PC-3 (cell line): ENCODE measurements at regions of chr14 and their contacts with region 1.

Region 1: DNA sequence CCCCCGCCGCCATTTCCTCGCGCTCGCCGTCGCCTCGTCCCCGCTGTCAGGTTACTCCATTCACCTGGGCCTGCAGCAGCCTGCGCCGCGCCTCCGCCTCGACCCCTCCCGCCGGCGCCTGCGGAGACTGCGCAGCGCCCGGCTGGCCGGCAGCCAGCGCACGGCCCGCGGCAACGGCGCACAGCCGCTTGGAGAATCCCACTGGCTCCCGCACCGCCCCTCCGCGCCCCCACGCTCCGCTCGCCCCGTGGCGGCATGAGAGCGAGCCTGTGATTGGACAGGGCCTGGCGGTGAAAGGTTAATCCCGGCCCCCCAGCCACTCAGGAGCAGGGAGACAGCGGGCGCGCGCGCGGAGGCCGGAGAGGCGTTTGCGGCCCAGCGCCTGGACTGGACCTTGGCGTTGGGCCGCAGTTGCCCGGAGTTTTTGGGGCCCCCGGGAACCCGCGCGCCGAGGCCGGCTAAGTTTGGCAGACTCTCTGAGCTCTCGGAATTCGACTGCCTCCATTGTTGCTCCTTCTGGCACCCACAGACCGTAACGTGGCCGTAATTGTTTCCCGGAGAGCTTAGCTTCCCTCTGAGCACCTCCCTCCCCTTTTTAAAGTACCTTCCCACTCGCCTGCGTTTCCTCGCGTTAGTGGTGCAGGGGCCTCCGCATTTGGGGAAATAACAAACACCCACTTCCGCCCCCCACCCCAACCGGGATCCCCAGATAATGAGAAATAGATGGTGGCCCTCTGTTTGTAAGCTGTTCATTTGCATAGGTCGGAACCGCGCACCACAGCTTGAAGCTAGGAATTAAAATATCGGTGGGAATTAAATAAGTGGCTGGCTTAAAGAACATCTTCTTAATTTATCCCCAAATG is at the start of gene DICER1:
- DNase-seq: peak; percentile 96
- ATAC-seq: peak; percentile 77
- H3K4me3 ChIP-seq: peak within 1 kb of the TSS; percentile 88
- H3K27ac ChIP-seq: peak within 1 kb of the TSS; percentile 59
- H3K4me1 ChIP-seq: peaks cover 33% of the 10 kb centered on the region
- H3K27me3 ChIP-seq: no peaks in the 10 kb centered on the region
- CTCF ChIP-seq: no peak
- total RNA-seq, gene DICER1: 29.9 and 36.3 TPM in 2 replicates

Region 2: GRCh38 chr14:95117937-95118721 is 39.4 kb before region 1 on chr14:
- CTCF ChIA-PET with region 1: no interaction called
- POLR2A ChIA-PET with region 1: no interaction called
- intact Hi-C with region 1: loop called (anchors 2 kb)
- DNase-seq: no peak
- ATAC-seq: no peak
- H3K4me3 ChIP-seq: no peak overlapping the region
- H3K27ac ChIP-seq: no peak overlapping the region
- H3K4me1 ChIP-seq: peaks cover 6% of the 10 kb centered on the region; the same call in 1 of the 2 replicates
- H3K27me3 ChIP-seq: no peaks in the 10 kb centered on the region
- CTCF ChIP-seq: no peak

Region 3: DNA sequence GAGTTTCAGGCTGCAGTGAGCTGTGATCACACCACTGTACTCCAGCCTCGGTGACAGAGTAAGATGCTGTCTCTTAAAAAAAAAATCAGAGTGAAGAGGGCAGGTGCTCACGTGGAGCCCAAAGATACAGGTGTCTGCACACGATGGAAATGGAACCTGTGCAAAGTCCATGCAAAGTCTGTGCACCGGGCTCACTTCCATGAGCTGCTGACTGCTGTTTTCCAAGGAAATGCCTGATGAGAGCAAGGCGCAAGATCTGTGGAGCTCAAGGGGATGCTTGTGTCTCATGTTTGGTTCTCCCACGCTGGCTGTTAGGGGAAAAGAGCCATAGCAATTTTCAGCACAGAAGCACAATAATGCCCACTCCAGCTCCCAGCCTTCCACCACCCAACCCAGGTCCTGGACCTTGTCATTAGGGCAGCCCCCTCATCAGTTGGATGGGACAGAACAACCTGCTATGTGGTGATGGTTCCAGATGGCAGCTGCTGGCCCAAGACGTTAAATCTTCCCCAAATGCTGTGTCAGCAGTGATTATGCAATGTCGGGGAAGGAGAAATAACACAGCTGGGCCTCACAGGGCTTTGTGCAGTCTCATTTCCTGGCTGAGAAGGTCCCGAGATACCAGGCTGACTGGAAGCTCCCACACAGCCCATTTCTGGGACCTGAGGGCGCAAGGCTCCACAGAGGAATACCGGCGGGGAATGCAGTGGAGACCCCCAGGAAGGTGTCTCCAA is 27.6 kb after region 1 on chr14:
- CTCF ChIA-PET with region 1: no interaction called
- POLR2A ChIA-PET with region 1: no interaction called
- intact Hi-C with region 1: no loop called
- DNase-seq: no peak
- ATAC-seq: no peak
- H3K4me3 ChIP-seq: no peak overlapping the region
- H3K27ac ChIP-seq: no peak overlapping the region
- H3K4me1 ChIP-seq: no peaks in the 10 kb centered on the region
- H3K27me3 ChIP-seq: no peaks in the 10 kb centered on the region
- CTCF ChIP-seq: no peak

Region 4: GRCh38 chr14:95265106-95266094 is 107.8 kb after region 1 on chr14:
- CTCF ChIA-PET with region 1: no interaction called
- POLR2A ChIA-PET with region 1: no interaction called
- intact Hi-C with region 1: loop called (anchors 5 kb)
- DNase-seq: peak; percentile 98
- ATAC-seq: peak; percentile 96
- H3K4me3 ChIP-seq: peak overlapping the region; percentile 16; the same call in 1 of the 2 replicates
- H3K27ac ChIP-seq: peak overlapping the region; percentile 90
- H3K4me1 ChIP-seq: peaks cover 33% of the 10 kb centered on the region
- H3K27me3 ChIP-seq: no peaks in the 10 kb centered on the region
- CTCF ChIP-seq: no peak